Activated CD8-positive, alpha-beta T cell treated with anti-CD3 and anti-CD28 coated beads, Interleukin-2, amount 10 ng/mL, durations not matched to agents 7 days and 5 days (primary cell): ENCODE measurements at regions of chr3 and their contacts with region 1.

Region 1: DNA sequence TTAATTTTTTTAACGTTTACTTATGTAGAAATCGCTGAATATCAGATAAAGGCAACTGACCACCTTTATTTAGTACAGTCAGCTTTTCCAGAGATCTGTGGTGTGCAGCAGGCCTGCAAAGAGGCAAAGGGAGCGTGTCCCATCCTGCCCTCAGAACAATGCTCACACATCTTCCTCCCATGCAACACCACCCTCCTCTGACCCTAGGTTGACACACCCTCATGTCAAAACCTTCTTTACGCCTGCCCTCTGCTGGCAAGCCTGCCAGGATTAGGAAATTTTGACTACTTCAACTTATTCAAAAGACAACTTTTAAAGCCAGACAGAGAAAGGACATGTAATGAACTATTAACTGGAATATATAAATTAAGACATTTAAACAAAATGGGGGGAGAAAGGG is 513.7 kb downstream of the FOXP1 start:
- DNase-seq: peak; percentile 82
- ATAC-seq: peak; percentile 38
- H3K4me3 Mint-ChIP-seq: no peak overlapping the region
- H3K27ac Mint-ChIP-seq: peak overlapping the region; percentile 45
- H3K4me1 Mint-ChIP-seq: peaks cover 65% of the 10 kb centered on the region
- H3K27me3 Mint-ChIP-seq: no peaks in the 10 kb centered on the region

Region 2: GRCh38 chr3:71006810-71007785 is 62.7 kb before region 1 on chr3:
- CTCF ChIA-PET with region 1: interaction called, 22 read pairs
- POLR2A ChIA-PET with region 1: interaction called, 8 read pairs
- DNase-seq: no peak
- ATAC-seq: no peak
- H3K4me3 Mint-ChIP-seq: no peak overlapping the region
- H3K27ac Mint-ChIP-seq: no peak overlapping the region
- H3K4me1 Mint-ChIP-seq: peaks cover 56% of the 10 kb centered on the region
- H3K27me3 Mint-ChIP-seq: no peaks in the 10 kb centered on the region

Region 3: GRCh38 chr3:71050538-71051258 is 19.1 kb before region 1 on chr3:
- CTCF ChIA-PET with region 1: interaction called, 53 read pairs
- POLR2A ChIA-PET with region 1: interaction called, 38 read pairs
- DNase-seq: peak; percentile 57
- ATAC-seq: peak; percentile 89
- H3K4me3 Mint-ChIP-seq: peak overlapping the region; percentile 20
- H3K27ac Mint-ChIP-seq: peak overlapping the region; percentile 80
- H3K4me1 Mint-ChIP-seq: peaks cover 98% of the 10 kb centered on the region
- H3K27me3 Mint-ChIP-seq: no peaks in the 10 kb centered on the region

Region 4: DNA sequence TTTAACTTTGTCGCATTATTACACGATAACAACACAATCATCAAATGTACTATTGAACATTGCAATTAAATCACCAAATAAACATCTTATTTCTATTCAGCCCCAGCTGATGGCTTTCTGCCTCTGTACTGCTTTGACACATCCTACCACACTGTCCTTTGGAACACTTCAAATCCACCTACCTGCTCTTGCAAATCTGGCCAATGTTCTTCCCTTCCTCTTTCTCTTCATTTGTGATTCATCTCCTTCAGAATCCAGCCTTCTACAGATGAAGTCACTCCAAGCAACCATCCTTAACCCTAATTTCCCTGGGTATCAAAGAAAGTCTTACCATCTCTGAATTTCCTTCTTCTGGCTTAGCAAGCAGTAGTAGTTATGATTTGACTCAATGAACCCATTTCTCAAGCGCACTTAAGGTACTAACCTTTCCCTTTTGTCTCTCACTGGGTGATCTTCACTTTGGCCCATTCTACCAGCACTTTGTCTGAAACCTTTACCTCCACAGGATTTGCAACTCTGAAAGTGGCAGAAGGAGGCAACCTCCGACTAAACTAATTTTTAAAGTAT is 10.8 kb after region 1 on chr3:
- CTCF ChIA-PET with region 1: interaction called, 39 read pairs
- POLR2A ChIA-PET with region 1: interaction called, 25 read pairs
- DNase-seq: no peak
- ATAC-seq: peak; percentile 19
- H3K4me3 Mint-ChIP-seq: no peak overlapping the region
- H3K27ac Mint-ChIP-seq: peak overlapping the region; percentile 53
- H3K4me1 Mint-ChIP-seq: peaks cover 83% of the 10 kb centered on the region
- H3K27me3 Mint-ChIP-seq: no peaks in the 10 kb centered on the region

Region 5: DNA sequence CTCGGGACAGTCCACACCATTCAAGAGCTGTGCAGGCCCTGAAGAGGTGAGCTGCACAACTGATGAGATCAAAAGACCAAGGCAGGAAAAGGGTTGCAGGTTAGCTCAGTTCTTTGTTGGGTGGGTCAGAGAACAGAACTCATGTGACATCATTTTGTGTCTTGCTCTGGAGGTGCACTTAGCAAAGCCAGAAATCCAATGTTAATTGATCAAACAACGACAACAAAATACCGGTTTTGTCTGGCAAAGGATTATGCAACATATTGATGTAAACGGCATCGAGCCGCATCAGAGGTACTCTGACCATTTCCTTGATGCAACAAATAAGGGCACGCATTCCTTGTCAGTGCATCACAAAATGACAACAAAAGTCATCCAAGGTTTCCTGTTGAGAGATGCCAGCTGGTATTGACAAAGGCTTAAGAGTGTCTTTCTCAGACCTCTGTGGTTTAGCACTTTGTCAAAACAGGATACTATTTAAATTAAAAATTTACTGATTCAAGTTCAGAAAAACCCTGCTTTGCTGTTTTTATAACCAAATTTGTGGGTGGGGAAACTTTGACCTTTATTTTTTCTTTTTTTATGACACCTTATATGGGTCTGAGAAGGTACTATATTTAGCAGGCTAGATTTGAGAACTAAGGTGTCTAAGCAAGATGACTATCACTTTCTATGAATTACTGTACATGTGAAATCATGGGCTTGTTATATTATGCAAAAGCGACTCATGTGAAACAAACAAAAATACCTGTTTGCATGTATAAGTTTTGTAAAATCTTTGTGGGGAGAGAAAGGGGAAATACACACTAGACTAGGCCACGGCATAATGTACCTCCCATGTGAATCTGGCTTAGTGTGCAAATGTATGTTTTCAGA is 17.6 kb after region 1 on chr3:
- CTCF ChIA-PET with region 1: interaction called, 39 read pairs
- POLR2A ChIA-PET with region 1: interaction called, 25 read pairs
- DNase-seq: peak; percentile 62
- ATAC-seq: peak; percentile 71
- H3K4me3 Mint-ChIP-seq: peak overlapping the region; percentile 37
- H3K27ac Mint-ChIP-seq: peak overlapping the region; percentile 90
- H3K4me1 Mint-ChIP-seq: peaks cover 74% of the 10 kb centered on the region
- H3K27me3 Mint-ChIP-seq: no peaks in the 10 kb centered on the region

Region 6: DNA sequence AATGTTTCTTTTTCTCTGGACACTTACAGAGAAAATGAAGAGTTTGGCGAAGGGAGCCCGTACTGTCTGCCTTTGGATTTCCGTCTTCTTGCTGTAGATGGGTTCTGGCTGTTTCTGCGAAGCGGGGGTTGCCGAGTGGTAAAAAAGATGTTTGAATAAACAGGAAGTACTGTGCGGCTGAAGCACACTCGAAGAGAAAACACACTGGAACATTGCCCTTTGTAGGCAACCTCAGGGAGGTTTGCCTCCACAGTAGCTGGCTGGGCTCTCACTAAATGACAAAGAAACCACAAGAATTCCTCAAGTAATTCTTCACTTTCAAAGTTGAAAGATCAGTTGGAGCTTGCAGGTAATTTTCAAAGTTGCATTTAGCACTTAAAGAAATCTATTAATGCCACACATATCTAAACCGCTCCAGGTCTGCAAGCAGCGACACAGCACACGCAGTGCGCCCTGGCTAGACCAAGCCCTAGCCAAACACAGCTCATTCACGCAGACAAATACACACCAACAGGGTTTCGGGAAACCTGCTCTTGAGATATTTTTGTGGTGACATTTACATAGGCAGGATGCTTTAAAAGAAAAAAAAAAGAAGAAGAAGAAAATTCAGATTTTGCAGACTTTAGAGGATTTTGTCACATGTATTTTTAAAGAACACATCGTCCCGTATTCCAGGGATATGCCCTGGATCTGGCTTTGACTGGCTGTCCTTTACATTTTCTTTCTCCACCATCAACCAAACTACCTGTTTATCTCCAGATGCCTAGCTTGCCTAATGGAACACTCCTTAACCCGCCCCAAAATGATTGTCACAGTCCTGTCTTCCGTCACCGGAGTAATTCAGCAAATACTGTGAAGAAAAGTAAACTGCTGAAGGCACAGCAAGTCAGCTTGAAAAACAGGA is 60.9 kb after region 1 on chr3:
- CTCF ChIA-PET with region 1: interaction called, 9 read pairs
- POLR2A ChIA-PET with region 1: interaction called, 47 read pairs
- DNase-seq: peak; percentile 86
- ATAC-seq: peak; percentile 74
- H3K4me3 Mint-ChIP-seq: peak overlapping the region; percentile 98
- H3K27ac Mint-ChIP-seq: peak overlapping the region; percentile 94
- H3K4me1 Mint-ChIP-seq: peaks cover 72% of the 10 kb centered on the region
- H3K27me3 Mint-ChIP-seq: no peaks in the 10 kb centered on the region

Region 7: DNA sequence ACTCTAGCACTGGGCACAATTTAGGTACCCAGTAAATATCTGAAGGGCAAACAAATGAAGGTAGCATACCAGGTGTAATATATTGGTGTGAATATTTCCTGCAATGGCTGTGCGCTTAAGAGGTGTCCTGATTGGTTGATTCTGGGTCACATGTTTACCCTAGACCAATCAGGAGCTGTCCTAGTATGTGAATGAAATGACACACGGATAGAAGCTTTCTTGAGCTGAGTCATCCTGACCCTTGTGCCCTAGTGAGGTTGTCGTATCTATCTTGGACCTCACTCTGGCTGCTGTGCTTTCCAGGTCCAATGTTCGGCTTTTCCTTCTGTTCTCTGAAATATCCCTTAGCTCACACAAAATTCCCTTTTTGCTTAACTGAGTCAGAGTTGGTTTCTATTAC is 571.9 kb after region 1 on chr3:
- CTCF ChIA-PET with region 1: no interaction called
- POLR2A ChIA-PET with region 1: no interaction called
- DNase-seq: no peak
- ATAC-seq: no peak
- H3K4me3 Mint-ChIP-seq: no peak overlapping the region
- H3K27ac Mint-ChIP-seq: no peak overlapping the region
- H3K4me1 Mint-ChIP-seq: no peaks in the 10 kb centered on the region
- H3K27me3 Mint-ChIP-seq: no peaks in the 10 kb centered on the region